Activated T-helper 1 cell treated with anti-CD3 and anti-CD28 coated beads, Interleukin-12 subunit alpha, Interleukin-12 subunit beta, Interleukin-2, Interleukin-4 antibody, amounts not matched to agents 30 ng/mL and 10 ng/mL and 1 ng/mL, durations not matched to agents 14 hours and 24 hours and 36 hours (primary cell): ENCODE measurements at regions of chr22 and their contacts with region 1.

Region 1: GRCh38 chr22:35627264-35628041 is 10.3 kb upstream of the MB start:
- DNase-seq: peak; percentile 22
- H3K4me3 Mint-ChIP-seq: peak overlapping the region; percentile 82
- H3K27ac Mint-ChIP-seq: peak overlapping the region; percentile 49
- H3K4me1 Mint-ChIP-seq: peaks cover 38% of the 10 kb centered on the region
- H3K27me3 Mint-ChIP-seq: peaks cover 1% of the 10 kb centered on the region

Region 2: GRCh38 chr22:35350539-35351503 is 276.6 kb before region 1 on chr22:
- intact Hi-C with region 1: loop called (anchors 1 kb)
- DNase-seq: peak; percentile 81
- H3K4me3 Mint-ChIP-seq: peak overlapping the region; percentile 79
- H3K27ac Mint-ChIP-seq: peak overlapping the region; percentile 48
- H3K4me1 Mint-ChIP-seq: peaks cover 27% of the 10 kb centered on the region
- H3K27me3 Mint-ChIP-seq: peaks cover 5% of the 10 kb centered on the region

Region 3: DNA sequence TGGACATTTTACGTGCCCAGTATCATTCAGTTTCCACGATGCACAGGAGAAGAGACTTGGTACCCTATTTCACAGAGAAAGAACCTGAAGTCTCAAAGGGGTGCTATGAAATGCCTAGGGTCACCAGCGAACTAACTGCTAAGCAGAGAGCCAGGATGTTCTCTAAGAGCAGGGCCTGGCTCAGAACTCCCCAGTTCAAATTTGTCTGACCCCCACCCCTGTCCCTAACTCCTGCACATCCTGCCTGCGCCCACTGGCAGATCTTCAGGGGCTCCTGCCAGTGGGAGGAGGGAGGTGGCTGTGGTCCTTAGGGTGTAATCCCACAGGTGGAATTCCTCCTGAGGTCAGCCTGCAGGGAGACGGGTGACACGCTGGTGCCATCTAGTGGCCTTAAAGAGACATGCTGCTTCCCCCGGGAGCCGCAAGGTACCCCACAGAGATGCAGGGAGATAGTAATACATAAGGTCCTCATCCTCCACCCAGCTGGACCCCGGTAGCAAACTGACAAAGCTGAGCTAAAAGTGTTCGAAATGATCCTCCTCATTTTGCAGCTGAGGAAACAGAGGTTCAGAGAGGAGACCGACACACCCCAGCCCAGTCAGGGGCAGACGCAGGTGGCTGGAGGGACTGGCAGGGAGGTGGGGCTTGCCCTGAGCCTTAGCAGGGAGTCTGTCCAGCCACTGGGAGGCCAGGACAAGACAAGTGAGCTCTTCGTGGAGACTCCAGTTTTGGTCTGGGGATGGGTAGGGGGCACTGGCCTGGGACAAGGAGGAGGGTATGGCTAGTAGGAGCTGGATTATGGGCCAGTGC is 44.4 kb before region 1 on chr22:
- intact Hi-C with region 1: loop called (anchors 1 kb)
- DNase-seq: peak; percentile 29
- H3K4me3 Mint-ChIP-seq: no peak overlapping the region
- H3K27ac Mint-ChIP-seq: no peak overlapping the region
- H3K4me1 Mint-ChIP-seq: peaks cover 6% of the 10 kb centered on the region
- H3K27me3 Mint-ChIP-seq: peaks cover 4% of the 10 kb centered on the region

Region 4: DNA sequence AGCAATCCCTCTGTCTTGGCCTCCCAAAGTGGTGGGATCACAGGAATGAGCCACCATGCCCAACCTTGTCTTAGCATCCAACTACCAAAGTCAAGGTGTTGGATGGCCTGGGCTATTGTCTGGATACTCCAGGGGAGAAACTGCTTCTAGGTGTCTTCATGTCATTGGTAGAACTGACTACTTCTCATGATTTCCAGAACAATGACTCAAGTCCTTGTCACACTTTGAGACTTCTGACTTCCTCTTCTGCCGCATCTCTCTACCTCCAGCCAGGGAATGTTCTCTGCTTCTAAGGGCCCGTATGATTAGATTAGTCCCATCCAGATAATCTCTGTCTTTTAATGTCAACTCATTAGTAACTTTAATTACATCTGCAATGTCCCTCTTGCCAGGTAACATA is 51.4 kb after region 1 on chr22:
- intact Hi-C with region 1: loop called (anchors 1 kb)
- DNase-seq: no peak
- H3K4me3 Mint-ChIP-seq: no peak overlapping the region
- H3K27ac Mint-ChIP-seq: peak overlapping the region; percentile 45
- H3K4me1 Mint-ChIP-seq: peaks cover 16% of the 10 kb centered on the region
- H3K27me3 Mint-ChIP-seq: peaks cover 3% of the 10 kb centered on the region

Region 5: GRCh38 chr22:35840302-35840739 is 212.9 kb after region 1 on chr22:
- intact Hi-C with region 1: loop called (anchors 5 kb)
- DNase-seq: no peak
- H3K4me3 Mint-ChIP-seq: no peak overlapping the region
- H3K27ac Mint-ChIP-seq: no peak overlapping the region
- H3K4me1 Mint-ChIP-seq: peaks cover 16% of the 10 kb centered on the region
- H3K27me3 Mint-ChIP-seq: peaks cover 24% of the 10 kb centered on the region

Region 6: GRCh38 chr22:36028646-36029405 is 401.4 kb after region 1 on chr22 and contains the start of gene RBFOX2:
- intact Hi-C with region 1: loop called (anchors 10 kb)
- DNase-seq: peak; percentile 54
- H3K4me3 Mint-ChIP-seq: peak within 1 kb of the TSS; percentile 87
- H3K27ac Mint-ChIP-seq: peak within 1 kb of the TSS; percentile 67
- H3K4me1 Mint-ChIP-seq: peaks cover 21% of the 10 kb centered on the region
- H3K27me3 Mint-ChIP-seq: peaks cover 47% of the 10 kb centered on the region
- total RNA-seq, gene RBFOX2: 3.7 and 3.8 TPM in 2 replicates

Region 7: GRCh38 chr22:36123673-36124630 is 496.5 kb after region 1 on chr22:
- intact Hi-C with region 1: loop called (anchors 1 kb)
- DNase-seq: peak; percentile 89
- H3K4me3 Mint-ChIP-seq: peak overlapping the region; percentile 54
- H3K27ac Mint-ChIP-seq: peak overlapping the region; percentile 83
- H3K4me1 Mint-ChIP-seq: peaks cover 10% of the 10 kb centered on the region
- H3K27me3 Mint-ChIP-seq: peaks cover 4% of the 10 kb centered on the region